ENCODE measurements at regions of chr16 and their contacts with region 1.

Region 1: GRCh38 chr16:68264128-68265077 is at the start of gene SLC7A6:
- DNase-seq: peak; percentile 86 to 91
- ATAC-seq: peak; percentile 73 to 88 (median 77)
- H3K4me3 ChIP-seq: peak within 1 kb of the TSS; percentile 89
- H3K4me3 Mint-ChIP-seq: peak within 1 kb of the TSS; percentile 96
- H3K27ac ChIP-seq: peak within 1 kb of the TSS; percentile 98
- H3K27ac Mint-ChIP-seq: peak within 1 kb of the TSS; percentile 95 to 100
- H3K4me1 ChIP-seq: peaks cover 39% of the 10 kb centered on the region
- H3K4me1 Mint-ChIP-seq: peaks cover 25 to 48% of the 10 kb centered on the region in 2 donors
- H3K27me3 ChIP-seq: no peaks in the 10 kb centered on the region
- H3K27me3 Mint-ChIP-seq: no peaks in the 10 kb centered on the region
- CTCF ChIP-seq: peak; percentile 73
- total RNA-seq, gene SLC7A6: 46.6 to 84.9 (median 69.6) TPM

Region 2: DNA sequence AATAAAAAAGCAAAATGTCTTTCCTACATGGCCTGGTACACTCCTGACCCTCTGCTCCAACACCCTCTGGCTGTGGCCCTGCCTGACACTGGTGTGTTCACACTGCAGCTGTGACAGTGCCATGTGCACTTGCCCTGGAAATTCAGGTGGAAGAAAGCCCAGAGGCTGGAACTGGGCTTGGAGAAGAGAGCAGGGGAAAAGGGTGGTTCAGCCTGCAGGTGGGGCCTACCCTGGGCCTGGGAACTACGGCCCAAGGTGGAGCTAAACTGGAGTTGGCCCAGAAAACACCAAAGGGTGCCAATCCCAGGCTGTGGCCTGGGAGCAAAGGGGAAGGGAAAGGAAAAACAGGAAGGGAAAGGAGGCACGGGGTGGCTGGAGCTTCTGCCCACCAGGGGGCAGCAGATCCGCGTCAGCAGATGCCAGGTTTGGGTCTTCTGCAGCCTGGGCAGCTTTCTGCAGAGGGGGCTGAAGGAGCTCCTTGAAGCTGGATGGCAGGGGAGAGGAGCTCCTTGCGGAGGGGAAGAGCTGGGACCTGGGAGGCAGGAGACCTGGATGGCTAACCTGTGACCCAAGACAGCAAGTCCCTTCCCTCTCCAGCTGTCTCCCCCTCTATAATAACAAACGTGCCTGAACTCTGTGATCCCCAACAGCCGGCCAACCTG is 717.5 kb before region 1 on chr16:
- intact Hi-C with region 1: no loop called
- DNase-seq: peak; percentile 71 to 89
- ATAC-seq: peak; percentile 27 to 49 (median 46)
- H3K4me3 ChIP-seq: no peak overlapping the region
- H3K4me3 Mint-ChIP-seq: no peak overlapping the region
- H3K27ac ChIP-seq: peak overlapping the region; percentile 71
- H3K27ac Mint-ChIP-seq: peak overlapping the region; percentile 47 to 53
- H3K4me1 ChIP-seq: peaks cover 46% of the 10 kb centered on the region
- H3K4me1 Mint-ChIP-seq: peaks cover 8 to 41% of the 10 kb centered on the region in 2 donors
- H3K27me3 ChIP-seq: no peaks in the 10 kb centered on the region
- H3K27me3 Mint-ChIP-seq: no peaks in the 10 kb centered on the region
- CTCF ChIP-seq: peak; percentile 98

Region 3: DNA sequence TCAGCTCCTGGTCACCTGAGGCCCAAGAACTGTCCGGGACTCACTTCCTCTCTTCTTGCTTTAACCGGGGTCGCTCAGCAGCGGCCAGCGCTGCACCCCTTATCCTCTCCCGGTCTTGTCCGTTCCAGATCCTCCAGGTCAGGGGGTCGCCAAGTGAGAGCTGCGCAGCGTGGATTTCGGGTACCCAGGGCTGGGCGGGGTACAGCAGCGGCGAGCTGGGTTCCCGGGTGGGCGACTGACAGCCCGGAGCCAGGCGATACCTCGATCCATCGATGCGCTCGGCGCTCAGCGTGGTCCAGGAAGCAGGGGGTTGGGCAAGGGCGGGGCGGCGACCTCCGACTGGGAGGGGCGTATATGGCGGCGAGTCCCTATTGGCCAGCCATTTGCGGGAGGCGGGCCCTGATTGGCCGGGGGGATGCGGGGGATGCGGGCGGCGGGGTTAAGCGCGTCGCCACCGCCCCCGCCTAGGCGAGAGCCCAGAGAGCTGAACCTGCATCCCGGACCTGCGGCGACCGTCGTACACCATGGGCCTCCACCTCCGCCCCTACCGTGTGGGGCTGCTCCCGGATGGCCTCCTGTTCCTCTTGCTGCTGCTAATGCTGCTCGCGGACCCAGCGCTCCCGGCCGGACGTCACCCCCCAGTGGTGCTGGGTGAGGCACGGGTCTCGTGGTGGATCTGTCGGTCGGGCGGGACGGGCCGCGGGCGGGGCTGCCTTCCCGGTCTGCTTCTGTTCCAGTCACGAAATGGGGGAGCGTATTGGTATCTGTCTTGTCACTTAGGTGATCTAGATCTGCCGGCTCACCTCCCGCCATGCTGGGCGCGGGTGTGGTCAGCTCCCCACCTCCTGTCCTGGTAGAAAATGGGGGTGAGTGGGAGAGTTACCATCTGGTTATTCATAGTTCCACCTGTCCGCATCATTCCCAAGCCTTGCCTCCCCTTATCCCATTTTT is 19.2 kb before region 1 on chr16 and contains the start of gene PLA2G15:
- intact Hi-C with region 1: loop called (anchors 2 kb)
- DNase-seq: peak; percentile 96 to 97
- ATAC-seq: peak; percentile 98 to 99 (median 98)
- H3K4me3 ChIP-seq: peak within 1 kb of the TSS; percentile 93
- H3K4me3 Mint-ChIP-seq: peak within 1 kb of the TSS; percentile 99
- H3K27ac ChIP-seq: no peak within 1 kb of the TSS
- H3K27ac Mint-ChIP-seq: peak within 1 kb of the TSS; percentile 81 to 91
- H3K4me1 ChIP-seq: peaks cover 36% of the 10 kb centered on the region
- H3K4me1 Mint-ChIP-seq: peaks cover 11 to 26% of the 10 kb centered on the region in 2 donors
- H3K27me3 ChIP-seq: no peaks in the 10 kb centered on the region
- H3K27me3 Mint-ChIP-seq: no peaks in the 10 kb centered on the region
- CTCF ChIP-seq: no peak
- total RNA-seq, gene PLA2G15: 5.6 to 13.0 (median 12.7) TPM

Region 4: GRCh38 chr16:68287276-68288251 is 23.2 kb after region 1 on chr16:
- intact Hi-C with region 1: loop called (anchors 2 kb)
- DNase-seq: peak in 1 of 2 donors; percentile 73
- ATAC-seq: peak; percentile 3 to 15 (median 6)
- H3K4me3 ChIP-seq: no peak overlapping the region
- H3K4me3 Mint-ChIP-seq: peak overlapping the region; percentile 51
- H3K27ac ChIP-seq: peak overlapping the region; percentile 74
- H3K27ac Mint-ChIP-seq: peak overlapping the region; percentile 77 to 88
- H3K4me1 ChIP-seq: peaks cover 96% of the 10 kb centered on the region
- H3K4me1 Mint-ChIP-seq: peaks cover 85 to 90% of the 10 kb centered on the region in 2 donors
- H3K27me3 ChIP-seq: no peaks in the 10 kb centered on the region
- H3K27me3 Mint-ChIP-seq: no peaks in the 10 kb centered on the region
- CTCF ChIP-seq: no peak

Region 5: DNA sequence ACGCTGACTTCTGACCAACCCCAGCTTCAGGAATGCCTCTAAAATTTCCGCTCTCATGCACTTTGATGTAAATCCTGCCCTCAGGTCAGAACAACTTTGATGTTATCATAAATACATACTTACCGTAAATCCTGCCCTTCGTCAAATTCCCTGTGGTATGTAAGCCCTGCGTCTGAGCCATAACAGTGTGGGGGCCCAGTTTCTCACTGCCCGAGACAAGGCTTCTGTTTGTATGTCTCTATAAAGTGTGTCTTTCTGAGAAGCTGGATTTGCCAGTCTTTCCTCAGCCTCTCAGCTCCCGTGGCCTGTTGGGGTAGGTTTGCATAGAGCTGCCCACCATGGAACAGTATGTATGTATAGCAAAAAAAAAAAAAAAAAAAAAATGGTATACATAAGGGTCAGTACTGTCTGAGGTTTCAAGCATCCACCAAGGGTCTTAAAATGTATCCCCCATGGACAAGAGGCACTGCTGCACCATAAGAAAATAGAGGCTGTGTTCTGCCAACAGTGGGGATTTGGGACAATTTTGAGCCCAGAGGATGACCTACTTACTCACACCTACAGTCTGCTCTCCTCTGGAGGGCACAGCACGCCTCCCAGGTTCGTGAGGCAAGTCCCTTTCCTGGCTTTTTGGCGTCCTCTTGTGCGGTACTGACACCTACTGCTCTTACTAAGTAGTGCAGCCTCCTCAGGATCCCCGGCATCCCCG is 63.9 kb after region 1 on chr16:
- intact Hi-C with region 1: loop called (anchors 1 kb)
- DNase-seq: peak; percentile 66 to 92
- ATAC-seq: peak; percentile 93 to 100 (median 100)
- H3K4me3 ChIP-seq: no peak overlapping the region
- H3K4me3 Mint-ChIP-seq: no peak overlapping the region
- H3K27ac ChIP-seq: no peak overlapping the region
- H3K27ac Mint-ChIP-seq: peak overlapping the region in 1 of 2 donors; percentile 4
- H3K4me1 ChIP-seq: peaks cover 3% of the 10 kb centered on the region
- H3K4me1 Mint-ChIP-seq: peaks cover 6% of the 10 kb centered on the region in 2 donors
- H3K27me3 ChIP-seq: no peaks in the 10 kb centered on the region
- H3K27me3 Mint-ChIP-seq: no peaks in the 10 kb centered on the region
- CTCF ChIP-seq: peak; percentile 92

Measured in natural killer cell (primary cell).